Dendritic cell treated with granulocyte-macrophage colony-stimulating factor and Interleukin-4, amounts not matched to agents 40 ng/mL and 50 ng/mL, for 4 days (primary cell): ENCODE measurements at regions of chr18 and their contacts with region 1.

Region 1: DNA sequence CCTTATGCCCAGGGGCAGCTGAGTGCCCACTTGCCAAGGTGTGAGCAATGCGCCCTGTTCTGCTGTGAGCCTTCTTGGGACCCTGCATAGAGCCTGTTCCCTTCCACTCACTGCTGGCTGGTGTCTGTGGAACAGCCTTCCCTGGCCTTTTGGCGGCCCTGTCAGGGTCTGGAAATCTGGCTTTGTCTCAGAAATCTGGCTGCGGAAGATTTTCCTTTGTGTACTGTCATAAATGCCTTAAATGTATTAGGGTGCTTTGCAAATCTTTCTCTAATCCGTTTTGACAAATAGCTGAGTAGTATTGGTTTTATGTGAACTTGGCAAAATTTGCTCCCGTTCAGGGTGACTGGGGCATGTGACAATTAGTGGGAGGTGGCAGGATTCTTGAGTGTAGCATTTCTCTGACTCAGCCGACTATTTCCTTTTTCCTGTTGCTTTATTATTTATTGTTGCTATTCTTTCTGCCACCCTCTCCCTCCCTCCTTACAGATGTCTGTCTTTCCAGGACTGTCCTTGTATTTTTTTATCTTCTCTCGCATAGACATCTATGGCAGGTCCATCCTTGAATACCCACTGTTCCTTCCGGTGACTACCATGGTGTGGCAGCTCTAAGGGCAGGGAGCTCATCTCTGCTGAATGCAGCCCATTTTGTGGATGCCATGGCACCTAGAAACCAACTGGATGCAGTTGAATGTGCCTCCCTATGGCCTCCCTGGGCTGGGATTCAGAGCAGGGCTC is 41.8 kb downstream of the LDLRAD4 start:
- H3K4me3 Mint-ChIP-seq: peak overlapping the region; percentile 32
- H3K27ac Mint-ChIP-seq: peak overlapping the region; percentile 71
- H3K4me1 Mint-ChIP-seq: peaks cover 67% of the 10 kb centered on the region
- H3K27me3 Mint-ChIP-seq: peaks cover 1% of the 10 kb centered on the region

Region 2: GRCh38 chr18:12777500-12777944 is 482.8 kb before region 1 on chr18:
- intact Hi-C with region 1: no loop called
- H3K4me3 Mint-ChIP-seq: peak overlapping the region; percentile 71
- H3K27ac Mint-ChIP-seq: peak overlapping the region; percentile 60
- H3K4me1 Mint-ChIP-seq: no peaks in the 10 kb centered on the region
- H3K27me3 Mint-ChIP-seq: peaks cover 6% of the 10 kb centered on the region

Region 3: DNA sequence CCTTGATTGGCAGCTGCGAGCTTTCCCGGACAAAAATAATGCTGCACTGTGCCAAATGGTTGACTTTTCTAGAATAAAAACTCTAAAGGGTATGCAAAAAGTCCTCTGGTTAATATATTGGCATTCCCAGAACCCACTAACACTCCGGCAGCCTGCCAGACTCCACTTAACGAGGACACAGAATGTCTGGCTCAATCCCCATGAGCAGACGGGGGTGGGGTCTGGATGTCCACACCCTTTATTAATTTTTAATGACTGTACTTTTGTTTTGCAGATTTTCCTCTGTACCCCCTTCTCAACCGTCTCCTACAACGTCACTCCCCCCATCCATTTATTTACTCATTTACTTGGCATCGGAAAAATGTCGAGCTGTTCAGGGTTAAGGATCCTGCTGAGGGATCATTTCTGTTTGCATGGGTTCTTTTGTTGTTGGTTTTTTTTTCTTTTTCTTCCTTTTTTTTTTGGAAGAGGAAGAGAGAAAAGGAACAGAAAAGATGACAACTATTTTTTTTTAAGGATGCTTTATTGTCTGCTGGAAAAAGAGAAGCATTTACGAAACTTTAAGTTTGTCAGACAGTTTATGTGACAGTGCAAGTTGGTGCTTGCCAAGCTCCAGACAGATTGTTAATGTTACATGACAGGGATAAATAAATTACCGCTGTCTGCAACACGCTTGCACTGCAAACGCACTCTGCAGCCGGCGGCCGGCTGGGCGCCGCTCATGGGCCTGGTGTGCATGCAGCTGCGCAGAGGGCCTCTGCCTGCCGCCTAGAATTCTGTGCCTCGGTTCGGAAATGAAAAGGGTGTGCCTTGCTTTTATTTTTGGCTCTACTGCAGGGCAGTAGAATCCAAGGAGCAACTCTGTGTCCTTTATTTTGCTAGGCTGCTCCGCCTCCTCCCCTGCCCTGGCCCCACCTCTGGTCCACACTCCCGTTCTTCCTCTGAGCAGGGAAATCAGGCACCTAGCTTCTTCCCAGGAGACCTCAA is 38.2 kb before region 1 on chr18:
- intact Hi-C with region 1: loop called (anchors 5 kb)
- H3K4me3 Mint-ChIP-seq: peak overlapping the region; percentile 80
- H3K27ac Mint-ChIP-seq: peak overlapping the region; percentile 85
- H3K4me1 Mint-ChIP-seq: peaks cover 70% of the 10 kb centered on the region
- H3K27me3 Mint-ChIP-seq: no peaks in the 10 kb centered on the region

Region 4: GRCh38 chr18:13680612-13681011 is 420.2 kb after region 1 on chr18:
- intact Hi-C with region 1: no loop called
- H3K4me3 Mint-ChIP-seq: no peak overlapping the region
- H3K27ac Mint-ChIP-seq: no peak overlapping the region
- H3K4me1 Mint-ChIP-seq: no peaks in the 10 kb centered on the region
- H3K27me3 Mint-ChIP-seq: no peaks in the 10 kb centered on the region